Activated CD4-positive, alpha-beta T cell treated with anti-CD3 and anti-CD28 coated beads, Interleukin-2, amount 10 ng/mL, durations not matched to agents 24 days and 14 days (primary cell): ENCODE measurements at regions of chr4 and their contacts with region 1.

Region 1: GRCh38 chr4:78612398-78613178 is 61.0 kb downstream of the ANXA3 start:
- DNase-seq: peak; percentile 66
- H3K4me3 Mint-ChIP-seq: no peak overlapping the region
- H3K27ac Mint-ChIP-seq: no peak overlapping the region
- H3K4me1 Mint-ChIP-seq: peaks cover 42% of the 10 kb centered on the region
- H3K27me3 Mint-ChIP-seq: peaks cover 2% of the 10 kb centered on the region

Region 2: DNA sequence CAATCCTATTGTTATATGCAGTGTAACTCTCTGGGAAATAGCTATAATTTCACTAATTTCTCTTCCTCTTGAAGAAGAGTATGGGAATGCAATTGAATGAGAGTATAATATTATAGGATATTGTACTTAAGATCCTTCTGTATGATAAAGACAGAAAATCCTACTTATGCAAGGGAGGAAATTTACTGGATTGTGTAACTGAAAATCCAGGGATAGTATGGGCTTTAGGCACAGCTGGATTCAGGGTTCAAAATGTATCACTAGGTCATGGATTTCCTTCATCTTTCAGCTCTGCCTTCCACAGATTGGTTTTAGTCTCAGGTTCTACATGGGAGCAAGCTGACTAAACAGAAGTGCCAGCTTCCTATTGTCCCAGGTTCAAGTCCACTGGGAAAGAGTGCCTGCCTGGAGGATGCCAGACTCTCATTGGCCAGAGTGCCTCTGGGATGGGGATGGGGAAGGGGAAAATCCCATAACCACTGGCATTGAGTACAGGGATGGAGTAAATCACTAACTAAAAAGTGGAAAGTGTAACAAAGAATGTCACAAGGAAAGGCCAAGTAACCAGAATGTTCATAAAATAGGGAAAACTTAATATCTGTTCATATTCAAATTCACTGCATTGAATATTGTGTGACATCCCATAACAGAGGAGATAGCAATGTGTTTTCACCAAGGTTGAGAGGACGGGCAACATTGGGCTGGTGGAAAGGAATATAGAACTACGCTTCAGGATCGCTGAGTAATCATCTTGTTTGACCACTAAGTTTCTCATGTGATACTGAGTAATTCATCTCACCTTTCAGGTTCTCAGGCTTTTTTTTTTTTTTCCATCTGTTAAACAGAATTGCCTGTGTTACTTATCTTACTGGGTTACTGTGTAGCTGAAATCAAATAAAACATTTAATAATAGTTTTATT is 14.7 kb after region 1 on chr4:
- intact Hi-C with region 1: loop called (anchors 2 kb)
- DNase-seq: no peak
- H3K4me3 Mint-ChIP-seq: no peak overlapping the region
- H3K27ac Mint-ChIP-seq: no peak overlapping the region
- H3K4me1 Mint-ChIP-seq: peaks cover 16% of the 10 kb centered on the region
- H3K27me3 Mint-ChIP-seq: no peaks in the 10 kb centered on the region

Region 3: GRCh38 chr4:78656968-78657445 is 44.4 kb after region 1 on chr4:
- intact Hi-C with region 1: loop called (anchors 2 kb)
- DNase-seq: peak; percentile 80
- H3K4me3 Mint-ChIP-seq: peak overlapping the region; percentile 61
- H3K27ac Mint-ChIP-seq: peak overlapping the region; percentile 65
- H3K4me1 Mint-ChIP-seq: peaks cover 38% of the 10 kb centered on the region
- H3K27me3 Mint-ChIP-seq: no peaks in the 10 kb centered on the region

Region 4: DNA sequence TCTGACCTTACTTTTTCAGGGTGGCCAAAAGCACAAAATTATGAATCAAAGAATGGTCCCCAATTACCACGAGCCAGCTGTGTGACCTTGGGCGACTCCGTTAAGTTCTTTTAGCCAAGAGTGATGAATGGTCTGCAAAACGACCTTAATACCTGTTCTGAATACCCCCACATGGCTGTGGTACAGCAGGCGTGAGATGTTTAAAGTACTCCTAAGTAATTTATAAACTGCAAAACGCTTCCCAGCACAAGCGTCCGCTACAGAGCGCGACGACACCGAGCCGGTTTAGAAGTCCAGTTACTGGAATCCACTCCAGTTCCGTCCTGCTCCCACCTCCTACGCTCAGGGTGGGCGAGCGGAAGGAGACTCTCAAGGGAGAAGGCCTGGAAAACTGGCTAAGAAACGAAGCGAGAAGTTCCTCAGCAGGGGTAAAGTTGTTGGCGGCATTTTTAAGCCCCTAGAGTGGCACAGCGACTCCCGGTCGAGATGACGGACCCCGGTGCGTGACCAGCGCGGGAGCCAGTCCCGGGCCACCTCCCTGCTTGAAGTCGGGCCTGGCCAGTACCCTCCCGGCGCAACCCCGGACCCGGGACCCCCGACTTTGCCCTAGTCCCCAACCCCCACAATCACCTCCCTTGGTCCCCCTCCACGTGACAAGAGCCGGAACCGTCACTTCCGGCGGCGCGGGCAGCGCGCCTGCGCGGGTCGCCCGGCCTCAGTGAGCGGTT is 162.9 kb after region 1 on chr4:
- intact Hi-C with region 1: loop called (anchors 2 kb)
- DNase-seq: peak; percentile 97
- H3K4me3 Mint-ChIP-seq: peak overlapping the region; percentile 93
- H3K27ac Mint-ChIP-seq: peak overlapping the region; percentile 98
- H3K4me1 Mint-ChIP-seq: peaks cover 34% of the 10 kb centered on the region
- H3K27me3 Mint-ChIP-seq: no peaks in the 10 kb centered on the region